Left cardiac atrium (tissue), 4 donors: ENCODE measurements at regions of chr6 and their contacts with region 1.

Region 1: DNA sequence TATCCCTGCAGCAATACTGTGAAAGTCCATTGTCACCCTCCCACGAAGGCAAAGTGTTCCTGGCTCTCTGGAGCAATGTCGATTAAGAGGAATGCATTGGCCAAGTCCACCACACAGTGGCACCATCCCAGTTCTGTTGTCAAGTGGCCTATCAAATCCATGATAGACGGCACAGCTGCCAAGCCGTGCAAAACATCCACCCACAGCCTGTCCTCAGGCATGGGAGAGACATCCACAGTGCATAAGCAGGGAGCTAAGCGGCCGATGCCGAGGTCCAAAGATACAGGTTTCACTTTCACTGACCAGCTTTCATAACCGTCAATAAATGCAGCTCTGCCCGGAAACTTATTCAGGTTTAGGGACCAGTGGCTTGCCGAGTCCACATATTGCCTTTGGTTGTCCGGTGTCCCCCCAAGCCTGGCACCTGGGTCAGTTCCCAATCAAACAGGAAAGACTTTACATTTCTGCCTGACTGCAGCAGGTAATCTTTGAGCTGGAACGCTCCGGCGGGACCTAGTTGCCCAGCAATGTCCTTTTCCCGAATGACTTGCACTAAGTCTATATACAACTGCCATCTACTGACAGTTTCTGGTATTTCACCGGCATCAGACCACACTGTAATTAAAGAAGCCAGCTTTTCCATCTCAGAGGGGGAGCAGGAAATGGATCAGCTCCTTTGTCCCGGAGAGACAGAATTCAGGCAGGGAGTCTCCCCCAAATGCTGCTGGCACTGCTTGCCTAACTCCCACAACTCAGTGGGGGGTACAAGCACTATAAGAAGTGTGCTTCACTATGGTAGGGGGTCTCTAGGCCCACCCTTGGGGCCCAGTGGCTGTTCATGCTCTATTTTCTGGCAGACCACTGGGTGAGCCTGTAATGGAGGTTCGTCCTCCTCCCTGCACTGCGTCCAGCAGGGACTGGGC is 6.3 kb downstream of the ZKSCAN3 start:
- DNase-seq: peak; percentile 66
- ATAC-seq: peak; percentile 88 to 92

Region 2: GRCh38 chr6:28136585-28137504 is 219.2 kb before region 1 on chr6:
- intact Hi-C with region 1: loop called (anchors 5 to 10 kb)
- DNase-seq: peak; percentile 95
- ATAC-seq: peak; percentile 91 to 92

Region 3: DNA sequence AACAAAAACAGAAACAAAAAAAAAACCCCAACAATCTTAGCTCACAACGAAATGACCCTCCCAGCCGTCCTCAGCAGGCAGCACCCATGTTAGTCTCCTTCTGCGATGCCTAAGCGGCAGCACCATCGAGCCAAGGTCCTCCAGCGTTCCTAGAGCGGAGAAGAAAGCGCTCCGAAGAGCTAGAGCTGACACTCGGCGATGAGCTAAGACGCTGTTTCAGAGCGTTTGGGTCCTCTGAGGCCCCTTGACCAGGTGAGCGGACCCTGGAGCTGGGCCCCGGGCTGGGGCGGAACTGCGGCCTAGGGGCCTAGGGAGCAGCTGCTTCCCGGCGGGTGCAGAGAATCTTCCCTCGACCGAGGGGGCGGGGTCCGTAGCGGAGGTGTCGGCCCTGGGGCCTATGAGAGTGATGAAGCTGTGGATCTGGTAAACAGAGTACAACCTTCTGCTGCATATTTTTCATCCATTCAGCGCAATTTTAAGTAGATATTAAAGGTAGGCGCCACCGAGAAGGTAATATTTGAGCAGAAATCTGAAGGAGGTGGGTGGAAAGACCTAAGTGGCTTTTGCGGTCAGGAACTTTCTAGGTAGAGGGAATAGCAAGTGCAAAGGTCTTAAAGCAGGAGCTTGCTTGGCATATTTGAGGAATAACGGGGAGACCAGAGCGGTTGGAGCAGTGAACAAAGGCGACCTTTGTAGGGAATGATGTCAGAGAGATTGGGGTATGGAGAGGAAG is 88.9 kb before region 1 on chr6 and contains the start of gene ZSCAN26:
- intact Hi-C with region 1: loop called in 1 of 2 experiments (anchors 5 kb)
- DNase-seq: peak; percentile 87
- ATAC-seq: peak; percentile 98
- total RNA-seq, gene ZSCAN26: 8.8 to 11.9 TPM

Region 4: DNA sequence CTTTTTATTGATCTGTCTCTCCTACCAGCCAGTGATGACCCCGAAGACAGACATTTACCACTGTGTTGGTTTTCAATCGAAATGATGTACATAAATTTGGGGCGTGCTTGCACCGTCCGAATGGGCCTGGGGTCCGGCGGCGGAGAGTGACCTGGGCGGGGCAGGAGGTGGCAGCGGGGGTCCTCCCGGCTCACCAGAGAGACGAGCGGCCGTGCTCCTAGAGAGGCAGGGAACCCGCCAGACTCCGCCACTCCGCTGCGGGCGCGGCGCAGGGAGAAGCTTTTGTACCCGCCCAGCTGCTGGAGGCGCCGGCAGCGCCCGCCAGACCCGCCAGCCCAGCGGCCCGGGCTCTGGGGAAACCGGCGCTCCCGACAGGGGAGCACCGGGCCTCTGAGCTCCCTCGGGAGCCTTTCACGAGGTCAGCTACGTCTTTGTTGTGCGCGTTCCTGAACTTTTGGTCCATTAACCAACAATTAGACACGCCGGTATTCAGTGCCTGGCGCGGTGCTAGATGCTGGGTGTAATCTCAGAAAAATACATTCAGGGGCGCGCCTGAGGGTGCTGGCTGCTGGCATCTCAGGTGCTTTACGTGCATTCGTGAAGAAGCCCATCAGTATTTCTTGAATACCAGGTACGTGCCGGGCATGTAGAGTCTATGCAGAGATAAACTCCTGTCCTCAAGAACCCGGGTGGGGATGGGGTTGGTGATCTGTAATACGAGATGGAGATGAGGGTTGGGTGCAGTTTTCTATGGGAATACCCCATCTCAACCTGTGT is 74.5 kb before region 1 on chr6 and contains the start of gene PGBD1:
- intact Hi-C with region 1: loop called in 1 of 2 experiments (anchors 2 kb)
- DNase-seq: peak; percentile 87
- ATAC-seq: peak; percentile 96 to 98
- total RNA-seq, gene PGBD1: 2.7 TPM